Common myeloid progenitor, CD34-positive (primary cell): ENCODE measurements at regions of chr16 and their contacts with region 1.

Region 1: DNA sequence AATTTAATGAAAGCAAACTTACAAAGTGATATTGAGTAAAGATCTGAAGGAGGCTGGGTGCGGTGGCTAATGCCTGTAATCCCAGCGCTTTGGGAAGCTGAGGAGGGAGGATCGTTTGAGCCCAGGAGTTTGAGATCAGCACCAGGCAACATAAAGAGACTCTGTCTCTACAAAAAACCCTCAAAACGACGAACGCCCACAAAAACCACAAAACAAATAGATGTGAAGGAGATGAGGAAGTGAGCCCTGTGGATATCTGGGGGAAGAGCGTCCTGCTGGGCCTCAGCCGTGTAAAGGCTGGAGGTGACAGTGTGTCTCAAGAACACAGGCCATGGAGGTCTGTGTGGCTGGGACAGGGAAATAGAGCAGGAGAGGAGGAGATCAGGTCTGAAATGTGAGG is 68.8 kb downstream of the ITFG1 start:
- DNase-seq: peak; percentile 57 to 86 (median 86)
- H3K4me3 ChIP-seq: no peak overlapping the region
- H3K27ac ChIP-seq: no peak overlapping the region
- H3K4me1 ChIP-seq: peaks cover 2 to 14% (median 8%) of the 10 kb centered on the region in 4 experiments
- H3K27me3 ChIP-seq: no peaks in the 10 kb centered on the region

Region 2: GRCh38 chr16:47045459-47045858 is 346.6 kb before region 1 on chr16:
- CTCF ChIA-PET with region 1: no interaction called
- POLR2A ChIA-PET with region 1: interaction called, 12 read pairs
- DNase-seq: peak; percentile 24 to 65 (median 41)
- H3K4me3 ChIP-seq: peak overlapping the region in 1 of 7 experiments; percentile 1
- H3K27ac ChIP-seq: no peak overlapping the region
- H3K4me1 ChIP-seq: peaks cover 3 to 20% (median 15%) of the 10 kb centered on the region in 4 experiments
- H3K27me3 ChIP-seq: peaks cover 0 to 30% (median 5%) of the 10 kb centered on the region in 5 experiments

Region 3: GRCh38 chr16:47320546-47321310 is 71.4 kb before region 1 on chr16:
- CTCF ChIA-PET with region 1: no interaction called
- POLR2A ChIA-PET with region 1: no interaction called
- DNase-seq: no peak
- H3K4me3 ChIP-seq: no peak overlapping the region
- H3K27ac ChIP-seq: no peak overlapping the region
- H3K4me1 ChIP-seq: no peaks in the 10 kb centered on the region
- H3K27me3 ChIP-seq: no peaks in the 10 kb centered on the region